Posterior cingulate gyrus (tissue), 11 donors: ENCODE measurements at regions of chr13 and their contacts with region 1.

Region 1: DNA sequence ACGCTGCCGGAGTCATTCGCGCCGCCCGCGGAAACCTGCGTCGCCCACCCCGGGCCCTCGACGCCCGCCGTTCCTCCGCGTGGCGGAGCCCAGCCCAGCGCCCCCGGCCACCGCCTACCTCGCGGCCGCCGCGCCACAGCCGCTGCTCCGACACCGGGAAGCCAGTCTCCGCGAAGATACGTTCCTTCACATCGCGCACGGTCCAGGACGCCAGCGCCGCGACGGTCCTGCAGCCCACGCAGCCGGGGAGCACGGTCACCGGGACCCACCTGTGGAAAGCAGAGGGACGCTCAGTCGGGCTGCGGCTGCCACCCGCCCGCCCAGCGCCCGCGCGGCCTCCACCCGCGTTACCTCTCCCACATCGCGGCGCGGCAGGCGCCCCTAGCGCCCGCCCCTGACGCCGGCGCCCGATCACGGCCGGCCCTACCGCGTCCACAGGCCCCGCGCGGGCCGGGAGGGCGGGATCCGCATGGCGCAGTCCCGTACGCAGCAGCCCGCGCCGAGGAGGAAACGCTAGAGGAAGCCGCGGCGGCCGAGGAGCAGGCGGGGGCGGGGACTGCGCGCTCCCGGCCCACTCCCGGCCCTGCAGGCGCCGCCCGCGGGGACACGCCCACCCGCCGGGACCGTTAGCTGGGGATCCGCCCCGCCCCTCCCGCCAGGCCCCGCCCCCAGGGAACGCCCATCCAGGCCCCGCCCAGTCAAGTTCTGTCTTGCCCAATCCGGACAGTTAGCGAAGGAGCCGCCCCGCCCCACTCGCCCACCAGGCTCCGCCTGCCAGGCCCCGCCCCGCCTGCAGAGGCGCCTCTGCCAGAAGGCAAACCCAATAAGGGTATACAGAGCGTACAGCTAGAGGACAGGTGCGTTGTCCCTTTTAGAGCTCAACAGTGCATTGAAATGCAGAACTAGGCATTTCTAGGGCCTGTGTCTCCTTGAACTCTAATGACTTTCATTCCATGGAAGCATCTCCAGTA is 58.2 kb downstream of the SACS start:
- DNase-seq: peak; percentile 93 to 100 (median 98)

Region 2: DNA sequence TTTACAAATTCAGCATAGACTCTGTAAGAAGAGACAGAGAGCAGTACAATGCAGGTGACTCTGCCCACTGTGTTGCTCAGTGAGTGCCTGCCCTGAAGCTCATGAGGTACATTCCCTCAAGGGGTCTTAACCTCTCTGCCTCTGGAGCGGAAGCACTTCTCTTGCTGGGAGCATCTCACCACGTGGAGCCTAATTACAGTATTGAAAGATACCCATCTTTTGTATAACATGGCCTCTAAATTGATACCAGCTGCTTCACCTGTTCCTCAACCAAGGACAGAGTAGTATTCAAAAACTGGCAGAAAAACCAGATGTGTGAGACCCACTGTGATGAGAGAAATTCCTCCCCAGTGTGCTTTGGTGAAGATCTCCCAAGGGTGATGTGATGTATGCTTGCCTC is 18.9 kb before region 1 on chr13:
- intact Hi-C with region 1: loop called (anchors 1 kb)
- DNase-seq: no peak

Region 3: DNA sequence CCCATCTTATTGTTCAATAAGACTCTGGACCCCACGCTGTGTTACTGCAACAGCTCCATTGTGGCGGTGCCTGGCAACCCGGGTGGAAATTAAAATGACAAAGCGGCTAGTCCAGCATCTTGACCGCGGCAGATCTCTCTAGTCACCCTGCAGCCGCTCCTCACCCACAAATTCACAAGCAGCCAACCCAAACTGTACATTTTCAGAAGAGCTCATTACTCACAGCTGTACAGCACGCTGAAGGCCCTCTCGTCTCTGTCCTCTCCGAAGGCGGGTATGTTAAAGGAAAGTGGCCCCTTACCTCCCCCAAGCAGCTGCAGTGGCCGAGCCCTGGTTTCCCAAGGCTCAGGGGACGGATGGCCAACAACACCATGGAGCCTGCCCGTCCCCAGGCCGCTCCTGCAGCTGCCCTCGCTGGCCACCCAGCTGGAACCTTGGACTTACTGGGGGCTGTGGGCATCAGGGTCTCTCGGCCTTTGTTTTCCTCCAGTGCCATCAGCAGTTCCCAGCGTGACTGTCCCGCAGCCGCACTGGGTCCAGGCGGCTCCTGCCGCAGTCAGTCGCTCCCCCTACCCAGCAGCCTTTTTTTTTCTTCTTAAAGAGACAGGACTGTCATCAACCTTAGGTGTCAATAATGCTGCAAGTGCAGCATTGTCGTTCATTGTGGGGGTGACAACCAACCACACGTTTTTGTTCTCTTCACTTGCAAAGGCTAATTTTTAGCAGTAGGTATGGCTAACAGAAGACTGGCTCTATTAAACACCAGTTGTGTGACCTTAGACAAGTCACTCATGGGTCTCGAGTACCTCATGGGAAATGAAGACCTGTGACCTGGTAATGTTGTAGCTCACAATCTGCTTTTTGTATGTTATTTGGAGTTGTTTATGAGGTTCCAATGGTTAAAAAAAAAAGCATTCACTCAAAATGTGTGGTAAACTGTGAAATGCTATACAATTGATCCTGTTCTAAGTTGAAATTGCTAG is 58.2 kb after region 1 on chr13 and contains the start of gene SACS:
- intact Hi-C with region 1: loop called (anchors 5 kb)
- DNase-seq: peak; percentile 38 to 94 (median 60)

Region 4: GRCh38 chr13:23466144-23467002 is 91.1 kb after region 1 on chr13:
- intact Hi-C with region 1: loop called (anchors 1 kb)
- DNase-seq: peak; percentile 51 to 96 (median 76)